Gastrocnemius medialis (tissue), 4 donors: ENCODE measurements at regions of chr2 and their contacts with region 1.

Region 1: DNA sequence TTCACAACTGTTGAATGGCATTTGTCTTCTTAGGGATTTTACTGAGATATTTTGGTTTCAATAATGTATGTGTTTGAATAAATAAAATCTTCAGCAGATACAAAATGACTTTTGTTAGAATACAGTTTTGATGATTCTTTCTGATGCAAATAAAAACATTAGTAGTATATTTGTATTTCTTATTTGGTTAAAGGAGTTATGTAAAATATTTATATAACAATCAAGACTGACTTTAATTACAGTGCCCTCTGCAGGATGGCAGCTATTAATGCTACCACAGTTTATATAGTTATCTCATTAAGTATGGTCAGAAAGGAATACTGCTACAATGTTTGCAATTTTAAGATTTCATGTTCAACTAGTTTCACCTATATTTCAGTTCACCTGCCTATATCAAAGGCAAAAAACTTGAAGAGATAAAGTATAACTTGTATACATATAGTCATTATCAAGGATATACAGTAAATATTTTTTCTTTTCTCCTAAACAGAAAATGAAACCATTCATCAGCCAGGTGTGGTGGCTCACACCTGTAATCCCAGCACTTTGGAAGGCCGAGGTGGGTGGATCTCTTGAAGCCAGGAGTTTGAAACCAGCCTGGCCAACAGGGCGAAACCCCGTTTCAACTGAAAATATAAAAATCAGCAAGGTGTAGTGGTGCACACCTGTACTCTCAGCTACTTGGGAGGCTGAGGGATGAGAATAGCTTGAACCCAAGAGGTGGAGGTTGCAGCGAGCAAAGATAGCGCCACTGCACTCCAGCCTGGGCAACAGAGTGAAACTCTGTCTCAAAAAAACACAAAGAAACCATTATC is 19.8 kb downstream of the ARL5A start:
- DNase-seq: no peak
- ATAC-seq: peak; percentile 59 to 75
- H3K4me3 ChIP-seq: no peak overlapping the region
- H3K27ac ChIP-seq: peak overlapping the region in 3 of 4 donors; percentile 24 to 61 (median 26)
- H3K4me1 ChIP-seq: peaks cover 12 to 21% of the 10 kb centered on the region in 2 donors
- H3K27me3 ChIP-seq: no peaks in the 10 kb centered on the region
- CTCF ChIP-seq: peak in 4 of 5 experiments; percentile 38 to 69 (median 57)
- POLR2A ChIP-seq: no peak

Region 2: GRCh38 chr2:151395509-151396374 is 412.7 kb before region 1 on chr2:
- in situ Hi-C with region 1: no loop called
- intact Hi-C with region 1: no loop called
- DNase-seq: no peak
- ATAC-seq: no peak
- H3K4me3 ChIP-seq: no peak overlapping the region
- H3K27ac ChIP-seq: no peak overlapping the region
- H3K4me1 ChIP-seq: no peaks in the 10 kb centered on the region
- H3K27me3 ChIP-seq: no peaks in the 10 kb centered on the region
- CTCF ChIP-seq: no peak
- POLR2A ChIP-seq: no peak

Region 3: DNA sequence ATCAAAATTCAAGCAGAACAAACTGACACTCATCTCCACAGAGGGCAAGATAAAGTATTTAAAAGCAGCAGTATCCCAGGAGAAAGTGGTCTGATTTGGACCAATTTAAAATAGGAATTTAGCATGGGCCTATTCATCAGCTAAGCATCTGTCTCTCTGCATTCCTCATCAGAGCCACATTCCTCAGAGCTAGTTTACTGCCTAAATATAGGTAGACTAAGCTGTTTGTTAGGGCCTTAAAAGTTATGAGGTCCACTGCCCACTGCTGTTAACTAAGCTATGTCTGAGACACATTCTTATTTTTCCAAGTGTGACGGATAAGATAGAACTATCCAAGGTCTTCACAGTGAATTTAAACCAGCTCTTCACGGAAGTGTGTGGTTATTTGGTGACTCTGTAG is 91.7 kb before region 1 on chr2:
- in situ Hi-C with region 1: no loop called
- intact Hi-C with region 1: loop called (anchors 5 kb)
- DNase-seq: no peak
- ATAC-seq: no peak
- H3K4me3 ChIP-seq: no peak overlapping the region
- H3K27ac ChIP-seq: peak overlapping the region; percentile 81 to 93 (median 86)
- H3K4me1 ChIP-seq: peaks cover 58% of the 10 kb centered on the region in 2 donors
- H3K27me3 ChIP-seq: no peaks in the 10 kb centered on the region
- CTCF ChIP-seq: no peak
- POLR2A ChIP-seq: no peak

Region 4: DNA sequence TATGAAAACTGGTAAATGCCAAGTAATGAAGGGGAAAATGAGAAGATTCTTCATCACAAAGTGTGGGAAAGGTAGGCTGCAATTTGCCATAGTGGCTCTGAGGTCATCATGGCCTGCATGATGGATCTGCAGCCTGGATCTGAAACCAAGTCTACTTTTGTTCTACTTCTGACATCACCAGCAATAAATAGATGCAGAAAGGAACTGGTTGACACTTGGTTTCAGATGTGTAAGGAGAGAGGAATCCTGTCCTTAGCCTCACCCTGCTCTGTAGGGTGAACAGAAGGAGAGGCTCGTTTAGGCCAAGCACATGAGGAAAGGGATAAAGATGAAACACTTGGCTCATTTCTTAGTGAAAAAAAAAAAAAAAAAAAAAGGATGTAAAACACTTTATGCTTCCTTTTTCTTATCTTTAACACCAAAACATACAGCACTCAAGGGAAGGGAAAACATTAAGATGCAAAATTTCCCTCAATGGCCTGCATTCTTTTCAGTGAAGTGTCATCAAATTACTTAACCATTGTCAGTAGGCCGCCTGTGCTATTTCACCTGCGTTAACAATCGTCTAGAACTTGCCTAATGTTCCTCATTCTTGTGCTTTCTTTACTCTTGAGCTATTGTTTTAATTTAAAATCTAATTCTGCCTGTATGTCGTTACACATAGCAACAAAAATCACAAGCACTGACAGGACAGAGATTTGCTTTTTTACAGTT is 78.0 kb before region 1 on chr2:
- in situ Hi-C with region 1: no loop called
- intact Hi-C with region 1: loop called (anchors 5 kb)
- DNase-seq: peak; percentile 51 to 62
- ATAC-seq: peak; percentile 76 to 77
- H3K4me3 ChIP-seq: peak overlapping the region; percentile 3 to 63 (median 40)
- H3K27ac ChIP-seq: peak overlapping the region; percentile 81 to 93 (median 90)
- H3K4me1 ChIP-seq: peaks cover 71 to 75% of the 10 kb centered on the region in 2 donors
- H3K27me3 ChIP-seq: no peaks in the 10 kb centered on the region
- CTCF ChIP-seq: no peak
- POLR2A ChIP-seq: peak; percentile 14 to 73

Region 5: DNA sequence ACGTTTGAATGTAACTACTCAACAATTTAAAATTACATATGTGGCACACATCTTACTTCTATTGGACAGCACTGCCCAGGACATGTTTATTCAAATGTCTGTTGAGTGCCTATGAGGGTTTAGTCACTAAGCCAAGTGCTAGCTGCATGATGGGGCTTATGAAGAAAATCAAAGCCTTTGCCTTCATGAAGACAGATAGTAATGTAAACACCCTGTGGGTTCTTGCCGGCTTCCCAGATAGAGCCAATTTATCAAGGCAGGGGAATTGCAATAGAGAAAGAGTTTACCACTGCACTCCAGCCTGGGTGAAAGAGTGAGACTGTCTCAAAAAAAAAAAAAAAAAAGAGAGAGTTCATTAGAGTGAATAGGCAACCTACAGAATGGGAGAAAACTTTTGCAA is 30.5 kb before region 1 on chr2:
- in situ Hi-C with region 1: no loop called
- intact Hi-C with region 1: loop called (anchors 2 kb)
- DNase-seq: no peak
- ATAC-seq: no peak
- H3K4me3 ChIP-seq: no peak overlapping the region
- H3K27ac ChIP-seq: peak overlapping the region in 3 of 4 donors; percentile 31 to 92 (median 88)
- H3K4me1 ChIP-seq: peaks cover 20 to 21% of the 10 kb centered on the region in 2 donors
- H3K27me3 ChIP-seq: no peaks in the 10 kb centered on the region
- CTCF ChIP-seq: no peak
- POLR2A ChIP-seq: no peak

Region 6: GRCh38 chr2:153432360-153432759 is 1623.9 kb after region 1 on chr2:
- in situ Hi-C with region 1: no loop called
- intact Hi-C with region 1: no loop called
- DNase-seq: no peak
- ATAC-seq: no peak
- H3K4me3 ChIP-seq: no peak overlapping the region
- H3K27ac ChIP-seq: no peak overlapping the region
- H3K4me1 ChIP-seq: no peaks in the 10 kb centered on the region
- H3K27me3 ChIP-seq: no peaks in the 10 kb centered on the region
- CTCF ChIP-seq: no peak
- POLR2A ChIP-seq: no peak